ENCODE measurements at regions of chr3 and their contacts with region 1.

Region 1: GRCh38 chr3:128969993-128970739 is 23.7 kb downstream of the CFAP92 start:
- DNase-seq: peak in 6 of 7 donors; percentile 31 to 59 (median 43)
- H3K4me3 ChIP-seq: no peak overlapping the region
- H3K27ac ChIP-seq: no peak overlapping the region
- H3K4me1 ChIP-seq: peaks cover 0 to 3% of the 10 kb centered on the region in 2 donors
- H3K27me3 ChIP-seq: no peaks in the 10 kb centered on the region
- CTCF ChIP-seq: peak; percentile 79 to 89 (median 83)
- POLR2A ChIP-seq: no peak

Region 2: GRCh38 chr3:128922804-128923459 is 47.2 kb before region 1 on chr3:
- intact Hi-C with region 1: no loop called
- DNase-seq: no peak
- H3K4me3 ChIP-seq: no peak overlapping the region
- H3K27ac ChIP-seq: no peak overlapping the region
- H3K4me1 ChIP-seq: no peaks in the 10 kb centered on the region
- H3K27me3 ChIP-seq: no peaks in the 10 kb centered on the region
- CTCF ChIP-seq: no peak
- POLR2A ChIP-seq: no peak

Region 3: DNA sequence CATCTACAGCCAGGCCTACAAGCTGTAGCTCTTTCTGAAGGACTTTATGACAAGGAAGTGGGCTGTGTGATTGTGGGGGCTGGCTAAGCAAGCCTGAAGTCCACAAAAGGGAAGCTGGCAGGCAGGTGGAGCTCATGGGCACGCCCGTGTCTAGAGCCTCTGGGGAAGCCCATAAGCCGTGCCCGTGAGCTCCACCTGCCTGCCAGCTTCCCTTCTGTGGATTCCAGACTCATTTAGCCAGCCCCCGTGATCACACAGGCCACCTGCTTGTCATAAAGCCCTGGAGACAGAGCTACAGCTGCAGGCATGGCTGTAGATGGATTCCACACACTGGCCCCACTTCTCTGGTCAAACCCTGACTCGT is 46.2 kb after region 1 on chr3:
- intact Hi-C with region 1: no loop called
- DNase-seq: peak in 1 of 7 donors; percentile 69
- H3K4me3 ChIP-seq: no peak overlapping the region
- H3K27ac ChIP-seq: peak overlapping the region in 3 of 5 donors; percentile 31 to 79 (median 60)
- H3K4me1 ChIP-seq: peaks cover 5 to 22% of the 10 kb centered on the region in 2 donors
- H3K27me3 ChIP-seq: no peaks in the 10 kb centered on the region
- CTCF ChIP-seq: no peak
- POLR2A ChIP-seq: no peak

Region 4: GRCh38 chr3:129077222-129077621 is 107.1 kb after region 1 on chr3:
- intact Hi-C with region 1: no loop called
- DNase-seq: no peak
- H3K4me3 ChIP-seq: no peak overlapping the region
- H3K27ac ChIP-seq: peak overlapping the region in 1 of 5 donors; percentile 2
- H3K4me1 ChIP-seq: no peaks in the 10 kb centered on the region
- H3K27me3 ChIP-seq: no peaks in the 10 kb centered on the region
- CTCF ChIP-seq: no peak
- POLR2A ChIP-seq: no peak

Region 5: GRCh38 chr3:129144786-129145185 is 174.6 kb after region 1 on chr3:
- intact Hi-C with region 1: loop called in 1 of 2 experiments (anchors 10 kb)
- DNase-seq: no peak
- H3K4me3 ChIP-seq: no peak overlapping the region
- H3K27ac ChIP-seq: no peak overlapping the region
- H3K4me1 ChIP-seq: no peaks in the 10 kb centered on the region
- H3K27me3 ChIP-seq: no peaks in the 10 kb centered on the region
- CTCF ChIP-seq: no peak
- POLR2A ChIP-seq: no peak

Measured in adrenal gland (tissue), 19 donors.